ENCODE measurements at regions of chr3 and their contacts with region 1.

Region 1: DNA sequence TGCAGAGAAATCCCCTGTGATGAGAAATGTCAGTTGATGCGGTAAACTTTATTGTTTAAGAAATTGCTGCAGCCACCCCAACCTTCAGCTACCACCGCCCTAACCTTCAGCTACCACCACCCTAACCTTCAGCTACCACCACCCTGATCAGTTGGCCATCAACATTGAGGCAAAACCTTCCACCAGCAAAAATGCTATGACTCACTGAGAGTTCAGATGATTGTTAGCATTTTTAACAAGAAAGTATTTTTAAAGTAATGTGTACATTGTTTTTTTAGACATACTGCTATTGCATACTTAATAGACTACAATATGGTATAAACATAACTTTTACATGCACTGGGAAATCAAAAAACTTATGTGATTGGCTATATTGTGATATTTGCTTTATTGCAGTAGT is 30.0 kb downstream of the U2SURP start:
- DNase-seq: no peak
- H3K27ac ChIP-seq: no peak overlapping the region
- CTCF ChIP-seq: no peak

Region 2: DNA sequence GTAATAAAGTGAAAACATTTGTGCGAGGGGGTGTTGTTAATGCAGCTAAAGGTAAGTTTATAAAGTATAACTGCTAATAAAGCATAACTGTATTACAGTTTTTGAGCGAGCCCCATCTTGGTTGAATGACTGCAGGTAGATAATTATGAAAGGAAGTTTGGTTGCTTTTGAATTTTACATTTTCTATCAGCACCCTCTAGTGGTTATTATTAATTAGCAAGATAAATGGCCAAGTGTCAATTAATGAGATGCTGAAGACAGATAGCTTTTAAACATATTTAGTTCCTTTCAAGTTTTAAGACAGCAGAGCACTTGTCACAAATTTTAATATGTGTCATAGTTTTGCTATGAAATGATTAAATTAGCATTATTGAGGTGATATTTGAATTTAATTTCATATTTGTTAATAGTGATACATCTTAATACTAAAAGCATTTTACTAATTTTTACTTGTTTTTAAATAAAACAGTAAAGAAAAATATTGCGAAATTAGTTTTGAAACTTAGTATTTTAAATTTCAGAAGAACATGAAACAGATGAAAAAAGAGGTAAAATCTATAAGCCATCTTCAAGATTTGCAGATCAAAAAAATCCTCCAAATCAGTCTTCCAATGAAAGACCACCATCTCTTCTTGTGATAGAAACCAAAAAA is 14.9 kb before region 1 on chr3:
- CTCF ChIA-PET with region 1: interaction called, 10 read pairs
- POLR2A ChIA-PET with region 1: no interaction called
- DNase-seq: peak; percentile 11
- H3K27ac ChIP-seq: no peak overlapping the region
- CTCF ChIP-seq: peak; percentile 75

Measured in RWPE1 (cell line).